ENCODE measurements at regions of chr16 and their contacts with region 1.

Region 1: GRCh38 chr16:81526935-81527334 is 82.3 kb downstream of the CMIP start:
- DNase-seq: peak; percentile 100
- H3K4me3 ChIP-seq: no peak overlapping the region
- H3K27ac ChIP-seq: peak overlapping the region; percentile 100
- H3K4me1 ChIP-seq: peaks cover 82% of the 10 kb centered on the region
- H3K27me3 ChIP-seq: no peaks in the 10 kb centered on the region
- CTCF ChIP-seq: no peak

Region 2: DNA sequence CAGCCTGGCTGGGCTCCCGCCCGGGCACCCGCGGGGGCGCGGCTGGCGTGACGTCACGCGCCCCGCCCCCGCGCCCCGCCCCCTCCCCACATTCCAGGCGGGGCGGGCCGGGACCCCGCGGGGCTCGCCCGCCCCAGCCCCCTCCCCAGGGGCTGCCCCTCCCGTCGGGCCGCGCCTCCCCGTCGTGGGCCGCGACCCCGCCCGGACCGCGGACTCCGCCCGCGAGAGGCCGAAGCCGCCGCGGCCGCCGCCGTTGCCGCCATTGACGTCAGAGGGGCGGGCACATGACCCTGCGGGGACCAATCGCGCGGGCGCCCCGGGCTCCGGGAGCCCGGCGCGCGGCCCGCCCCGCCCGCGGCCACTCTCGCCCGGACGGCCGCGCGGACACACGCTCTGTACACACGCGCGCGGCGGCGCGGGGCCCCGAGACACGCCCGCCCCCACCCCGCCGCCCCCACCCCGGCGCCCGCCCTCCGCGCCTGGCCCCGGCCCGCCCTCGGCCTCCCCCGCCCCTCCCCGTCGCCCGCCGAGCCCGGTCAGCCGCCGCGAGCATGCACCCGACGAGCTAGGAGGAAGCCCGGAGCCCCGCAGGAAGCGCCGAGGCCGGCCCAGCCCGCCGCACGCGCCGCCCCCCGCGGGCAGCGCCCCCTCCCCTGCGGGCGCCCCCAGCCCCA is 82.3 kb before region 1 on chr16 and contains the start of gene CMIP:
- CTCF ChIA-PET with region 1: no interaction called
- dilution Hi-C with region 1: no loop called
- in situ Hi-C with region 1: no loop called
- intact Hi-C with region 1: loop called (anchors 1 kb)
- DNase-seq: peak; percentile 74
- H3K4me3 ChIP-seq: peak within 1 kb of the TSS; percentile 69 to 94 (median 72)
- H3K27ac ChIP-seq: peak within 1 kb of the TSS; percentile 93
- H3K4me1 ChIP-seq: peaks cover 26% of the 10 kb centered on the region
- H3K27me3 ChIP-seq: no peaks in the 10 kb centered on the region
- CTCF ChIP-seq: no peak
- total RNA-seq, gene CMIP: 44.5 to 98.5 TPM

Region 3: DNA sequence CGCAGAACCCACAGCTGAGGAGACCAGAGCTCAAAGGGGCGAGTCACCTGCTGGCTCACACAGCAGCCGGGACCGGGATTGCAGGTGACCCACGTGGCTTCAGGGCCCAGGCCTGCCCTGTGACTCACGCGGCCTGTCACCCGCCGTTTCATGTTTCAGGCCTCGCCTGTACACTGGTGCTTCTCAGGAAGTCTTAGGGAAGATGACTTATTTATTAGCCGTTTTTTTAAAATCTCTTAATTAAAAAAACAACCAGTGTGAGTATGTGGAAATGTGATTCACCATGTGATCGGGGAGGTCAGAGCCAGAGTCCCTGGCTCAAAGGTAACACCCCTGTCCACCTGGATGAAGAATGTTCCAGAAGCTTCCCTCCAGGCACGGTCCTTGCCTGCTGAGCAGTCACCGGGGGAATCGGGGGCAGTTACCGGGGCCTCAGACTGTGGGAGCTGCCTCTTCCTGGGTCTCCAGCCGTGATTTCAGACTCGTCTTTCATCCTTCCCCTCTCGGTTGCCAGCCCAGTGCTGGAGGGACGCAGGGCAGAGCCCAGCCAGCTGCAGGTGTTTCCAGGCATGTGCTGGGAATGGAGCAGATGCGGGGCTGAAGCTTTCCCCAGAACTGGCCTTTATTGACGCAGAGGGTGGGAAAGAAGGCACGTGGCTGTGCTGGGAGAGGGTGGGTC is 33.0 kb before region 1 on chr16:
- CTCF ChIA-PET with region 1: no interaction called
- dilution Hi-C with region 1: loop called (anchors 5 kb)
- in situ Hi-C with region 1: no loop called
- intact Hi-C with region 1: loop called (anchors 1 kb)
- DNase-seq: peak; percentile 97
- H3K4me3 ChIP-seq: no peak overlapping the region
- H3K27ac ChIP-seq: peak overlapping the region; percentile 90
- H3K4me1 ChIP-seq: peaks cover 56% of the 10 kb centered on the region
- H3K27me3 ChIP-seq: no peaks in the 10 kb centered on the region
- CTCF ChIP-seq: no peak

Region 4: GRCh38 chr16:81511371-81511770 is 15.6 kb before region 1 on chr16:
- CTCF ChIA-PET with region 1: no interaction called
- dilution Hi-C with region 1: no loop called
- in situ Hi-C with region 1: no loop called
- intact Hi-C with region 1: loop called (anchors 1 kb)
- DNase-seq: peak; percentile 65
- H3K4me3 ChIP-seq: no peak overlapping the region
- H3K27ac ChIP-seq: peak overlapping the region; percentile 73
- H3K4me1 ChIP-seq: peaks cover 20% of the 10 kb centered on the region
- H3K27me3 ChIP-seq: no peaks in the 10 kb centered on the region
- CTCF ChIP-seq: no peak

Region 5: GRCh38 chr16:81585785-81586184 is 58.9 kb after region 1 on chr16:
- CTCF ChIA-PET with region 1: interaction called, 3 read pairs
- dilution Hi-C with region 1: loop called (anchors 5 kb)
- in situ Hi-C with region 1: no loop called
- intact Hi-C with region 1: loop called (anchors 1 kb)
- DNase-seq: no peak
- H3K4me3 ChIP-seq: no peak overlapping the region
- H3K27ac ChIP-seq: no peak overlapping the region
- H3K4me1 ChIP-seq: peaks cover 55% of the 10 kb centered on the region
- H3K27me3 ChIP-seq: no peaks in the 10 kb centered on the region
- CTCF ChIP-seq: peak; percentile 14 to 48